ENCODE measurements at regions of chr3 and their contacts with region 1.

Region 1: GRCh38 chr3:188954590-188955208 is 217.1 kb upstream of the TPRG1 start:
- DNase-seq: no peak
- H3K4me3 ChIP-seq: no peak overlapping the region
- CTCF ChIP-seq: peak; percentile 89

Region 2: GRCh38 chr3:187719628-187720336 is 1234.9 kb before region 1 on chr3:
- CTCF ChIA-PET with region 1: interaction called, 16 read pairs
- POLR2A ChIA-PET with region 1: no interaction called
- DNase-seq: no peak
- H3K4me3 ChIP-seq: no peak overlapping the region
- CTCF ChIP-seq: no peak

Region 3: GRCh38 chr3:188533612-188534357 is 420.9 kb before region 1 on chr3:
- CTCF ChIA-PET with region 1: interaction called, 14 read pairs
- POLR2A ChIA-PET with region 1: no interaction called
- DNase-seq: no peak
- H3K4me3 ChIP-seq: no peak overlapping the region
- CTCF ChIP-seq: no peak

Region 4: GRCh38 chr3:188643736-188644135 is 311.0 kb before region 1 on chr3:
- CTCF ChIA-PET with region 1: interaction called, 16 read pairs
- POLR2A ChIA-PET with region 1: no interaction called
- DNase-seq: no peak
- H3K4me3 ChIP-seq: no peak overlapping the region
- CTCF ChIP-seq: no peak

Region 5: GRCh38 chr3:188792793-188793192 is 161.9 kb before region 1 on chr3:
- CTCF ChIA-PET with region 1: interaction called, 30 read pairs
- POLR2A ChIA-PET with region 1: interaction called, 5 read pairs
- DNase-seq: no peak
- H3K4me3 ChIP-seq: no peak overlapping the region
- CTCF ChIP-seq: peak; percentile 61

Region 6: GRCh38 chr3:188974856-188975599 is 20.3 kb after region 1 on chr3:
- CTCF ChIA-PET with region 1: interaction called, 24 read pairs
- POLR2A ChIA-PET with region 1: no interaction called
- DNase-seq: no peak
- H3K4me3 ChIP-seq: no peak overlapping the region
- CTCF ChIP-seq: no peak